ENCODE measurements at regions of chr5 and their contacts with region 1.

Region 1: GRCh38 chr5:177357459-177358351 is at the start of gene RGS14:
- DNase-seq: peak; percentile 82
- ATAC-seq: peak; percentile 94
- H3K4me3 Mint-ChIP-seq: peak within 1 kb of the TSS; percentile 92
- H3K27ac Mint-ChIP-seq: peak within 1 kb of the TSS; percentile 86
- H3K4me1 Mint-ChIP-seq: peaks cover 71% of the 10 kb centered on the region
- H3K27me3 Mint-ChIP-seq: no peaks in the 10 kb centered on the region
- total RNA-seq, gene RGS14: 52.3 to 93.0 TPM

Region 2: DNA sequence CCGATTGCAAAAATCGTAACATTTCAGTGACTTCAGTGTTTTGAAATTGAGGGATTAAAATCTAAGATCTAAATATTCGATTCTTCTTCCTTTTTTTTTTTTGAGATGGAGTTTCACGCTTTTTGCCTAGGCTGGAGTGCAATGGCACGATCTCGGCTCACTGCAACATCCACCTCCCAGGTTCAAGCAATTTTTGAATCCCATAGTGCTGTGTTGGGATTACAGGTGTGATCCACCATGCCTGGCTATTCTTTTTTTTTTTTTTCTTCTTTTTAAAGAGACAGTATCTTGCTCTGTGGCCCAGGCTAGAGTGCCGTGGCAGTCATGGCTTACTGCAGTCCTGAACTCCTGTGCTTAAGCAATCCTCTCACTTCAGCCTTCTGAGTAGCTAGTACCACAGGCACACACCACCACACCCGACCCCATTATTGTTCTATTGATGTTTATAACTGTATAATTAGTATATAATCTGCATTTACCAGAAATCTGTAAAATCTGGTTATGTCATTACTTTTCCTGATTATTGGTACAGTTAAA is 181.5 kb before region 1 on chr5:
- CTCF ChIA-PET with region 1: no interaction called
- DNase-seq: peak; percentile 18
- ATAC-seq: no peak
- H3K4me3 Mint-ChIP-seq: no peak overlapping the region
- H3K27ac Mint-ChIP-seq: no peak overlapping the region
- H3K4me1 Mint-ChIP-seq: peaks cover 10% of the 10 kb centered on the region
- H3K27me3 Mint-ChIP-seq: no peaks in the 10 kb centered on the region

Region 3: DNA sequence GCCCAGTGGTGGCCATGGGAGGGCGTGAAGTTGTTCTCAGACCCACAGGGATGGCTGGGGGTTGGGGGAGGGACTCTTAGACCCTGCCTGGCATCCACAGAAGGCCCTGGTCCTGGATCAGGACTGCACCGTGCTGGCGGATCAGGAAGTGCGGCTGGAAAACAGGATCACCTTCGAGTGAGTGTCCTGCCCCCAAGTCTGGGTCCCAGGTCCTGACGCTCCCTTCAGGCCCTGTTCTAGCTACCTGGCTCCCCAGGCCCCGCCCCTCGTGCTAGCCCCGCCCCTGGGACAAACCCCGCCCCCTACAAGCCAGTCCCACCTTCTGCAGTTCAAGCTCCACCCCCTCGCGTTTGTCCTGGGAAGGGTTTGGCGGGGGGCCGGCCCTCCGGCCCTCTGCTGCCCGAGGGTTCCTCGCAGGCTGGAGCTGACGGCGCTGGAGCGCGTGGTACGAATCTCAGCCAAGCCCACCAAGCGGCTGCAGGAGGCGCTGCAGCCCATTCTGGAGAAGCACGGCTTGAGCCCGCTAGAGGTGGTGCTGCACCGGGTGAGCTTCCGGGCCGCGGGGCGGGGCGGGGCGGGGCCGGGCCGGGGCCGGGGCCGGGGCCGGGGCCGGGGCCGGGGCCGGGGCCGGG is 12.9 kb after region 1 on chr5:
- CTCF ChIA-PET with region 1: interaction called, 79 read pairs
- DNase-seq: peak; percentile 77
- ATAC-seq: peak; percentile 83
- H3K4me3 Mint-ChIP-seq: peak overlapping the region; percentile 53
- H3K27ac Mint-ChIP-seq: no peak overlapping the region
- H3K4me1 Mint-ChIP-seq: peaks cover 56% of the 10 kb centered on the region
- H3K27me3 Mint-ChIP-seq: no peaks in the 10 kb centered on the region

Region 4: DNA sequence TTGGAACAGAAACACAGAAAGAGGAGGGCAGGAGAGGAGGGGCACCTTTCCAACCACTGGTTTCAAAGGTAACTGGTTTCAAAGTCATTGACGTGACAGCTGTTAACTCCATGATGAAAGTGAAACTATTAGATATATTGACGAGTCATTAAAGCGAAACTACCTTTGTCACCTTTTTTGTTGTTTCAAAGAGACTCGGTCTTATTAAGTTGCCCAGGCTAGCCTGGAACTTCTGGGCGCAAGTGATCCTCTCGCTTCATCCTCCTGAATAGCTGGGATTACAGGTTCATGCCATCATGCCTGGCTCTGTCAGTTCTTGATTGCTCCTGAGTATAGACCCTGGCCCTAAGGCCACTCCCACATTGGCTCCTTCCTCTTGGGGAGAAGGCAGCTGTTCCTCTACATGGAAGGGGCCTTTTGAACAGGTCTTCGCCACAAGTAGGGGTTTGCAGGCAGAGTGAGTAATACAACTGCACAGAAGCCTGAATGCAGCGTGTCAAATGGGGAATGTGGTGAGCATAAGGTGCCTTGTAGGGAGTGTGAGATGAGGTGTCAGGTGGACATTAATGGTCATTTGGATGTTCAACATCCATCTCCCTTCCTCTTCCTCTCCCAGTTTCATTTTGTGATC is 55.0 kb after region 1 on chr5:
- CTCF ChIA-PET with region 1: no interaction called
- DNase-seq: no peak
- ATAC-seq: peak; percentile 67
- H3K4me3 Mint-ChIP-seq: peak overlapping the region; percentile 43
- H3K27ac Mint-ChIP-seq: peak overlapping the region; percentile 79
- H3K4me1 Mint-ChIP-seq: peaks cover 31% of the 10 kb centered on the region
- H3K27me3 Mint-ChIP-seq: no peaks in the 10 kb centered on the region

Measured in activated CD8-positive, alpha-beta memory T cell treated with anti-CD3 and anti-CD28 coated beads, Interleukin-2, amount 10 ng/mL, durations not matched to agents 7 days and 5 days (primary cell).